Psoas muscle (tissue), 8 donors: ENCODE measurements at regions of chr18 and their contacts with region 1.

Region 1: DNA sequence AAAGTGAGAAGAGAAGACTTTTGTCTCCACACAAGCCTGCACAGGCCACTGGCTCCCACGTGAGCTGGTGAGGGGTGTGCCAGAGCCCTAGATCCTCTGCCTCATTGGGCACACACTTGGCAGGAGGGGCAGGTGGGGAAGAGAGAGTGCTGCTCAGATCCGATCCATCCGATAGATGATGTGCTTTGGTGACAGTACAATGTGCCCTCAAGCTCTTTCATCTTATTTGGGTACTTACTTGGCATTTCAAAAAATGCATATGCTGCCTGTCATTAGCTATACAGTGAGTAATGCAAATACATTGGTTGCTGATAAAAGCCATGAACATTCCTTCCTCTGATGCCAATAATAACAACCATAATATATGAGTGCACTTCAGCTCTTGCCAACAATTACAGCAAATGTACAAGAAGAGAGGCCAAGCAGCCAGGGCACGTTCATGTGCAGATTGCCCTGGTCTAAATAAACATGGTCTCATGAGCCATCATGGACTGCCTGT is 255.3 kb downstream of the VAPA start:
- DNase-seq: no peak
- ATAC-seq: no peak
- H3K4me3 ChIP-seq: no peak overlapping the region
- H3K27ac ChIP-seq: no peak overlapping the region
- H3K4me1 ChIP-seq: no peaks in the 10 kb centered on the region
- H3K27me3 ChIP-seq: no peaks in the 10 kb centered on the region
- CTCF ChIP-seq: no peak

Region 2: GRCh38 chr18:10114717-10115463 is 54.2 kb before region 1 on chr18:
- intact Hi-C with region 1: loop called in 1 of 2 experiments (anchors 5 kb)
- DNase-seq: no peak
- ATAC-seq: no peak
- H3K4me3 ChIP-seq: no peak overlapping the region
- H3K27ac ChIP-seq: no peak overlapping the region
- H3K4me1 ChIP-seq: no peaks in the 10 kb centered on the region
- H3K27me3 ChIP-seq: no peaks in the 10 kb centered on the region
- CTCF ChIP-seq: no peak